SK-N-SH (cell line): ENCODE measurements at regions of chr7 and their contacts with region 1.

Region 1: GRCh38 chr7:39894904-39895303 is 55.2 kb upstream of the CDK13 start:
- DNase-seq: no peak
- H3K4me3 ChIP-seq: no peak overlapping the region
- H3K27ac ChIP-seq: no peak overlapping the region
- H3K4me1 ChIP-seq: no peaks in the 10 kb centered on the region; a peak in 1 of 4 replicates
- H3K27me3 ChIP-seq: peaks cover 18% of the 10 kb centered on the region; the same call in 1 of the 2 replicates
- CTCF ChIP-seq: no peak
- EP300 ChIP-seq: no peak
- RAD21 ChIP-seq: no peak

Region 2: DNA sequence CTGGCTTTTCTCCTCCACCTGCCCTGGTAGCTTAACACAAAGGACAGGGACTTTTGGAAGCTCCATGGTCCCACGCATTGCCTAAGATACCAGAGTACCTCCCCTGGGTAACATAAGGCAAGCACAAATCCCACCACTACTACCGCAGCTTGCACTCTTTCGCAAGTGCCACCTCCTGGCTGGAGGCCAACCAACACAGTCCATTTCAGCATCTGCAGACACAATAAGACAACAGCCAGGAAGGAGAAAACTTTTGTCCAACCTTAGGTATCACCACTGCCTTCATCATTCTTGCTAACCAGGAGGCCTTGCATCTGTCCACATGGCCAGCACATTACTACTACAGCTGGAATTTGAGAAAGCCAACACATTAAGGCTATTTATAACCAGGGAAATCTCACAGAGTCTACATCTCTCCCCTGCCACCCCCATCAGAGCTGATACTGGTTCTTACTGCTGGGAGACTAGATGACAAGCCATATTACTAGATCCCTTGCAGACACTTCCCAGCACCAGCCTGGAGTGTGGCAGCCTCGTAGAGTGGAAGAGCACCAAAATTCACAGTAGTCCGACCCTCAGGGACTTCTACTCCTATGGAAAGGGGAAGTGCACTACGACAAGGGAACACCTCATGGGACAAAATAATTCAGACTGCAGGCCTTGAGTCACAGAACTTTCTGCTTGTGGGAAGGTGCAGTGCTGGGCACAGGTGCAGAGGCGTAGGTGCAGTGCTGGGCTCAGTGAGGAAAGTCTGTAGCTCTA is 15.4 kb after region 1 on chr7:
- CTCF ChIA-PET with region 1: interaction called, 19 read pairs
- POLR2A ChIA-PET with region 1: no interaction called
- DNase-seq: no peak
- H3K4me3 ChIP-seq: no peak overlapping the region
- H3K27ac ChIP-seq: no peak overlapping the region
- H3K4me1 ChIP-seq: no peaks in the 10 kb centered on the region; a peak in 1 of 4 replicates
- H3K27me3 ChIP-seq: no peaks in the 10 kb centered on the region
- CTCF ChIP-seq: no peak
- EP300 ChIP-seq: no peak
- RAD21 ChIP-seq: no peak

Region 3: DNA sequence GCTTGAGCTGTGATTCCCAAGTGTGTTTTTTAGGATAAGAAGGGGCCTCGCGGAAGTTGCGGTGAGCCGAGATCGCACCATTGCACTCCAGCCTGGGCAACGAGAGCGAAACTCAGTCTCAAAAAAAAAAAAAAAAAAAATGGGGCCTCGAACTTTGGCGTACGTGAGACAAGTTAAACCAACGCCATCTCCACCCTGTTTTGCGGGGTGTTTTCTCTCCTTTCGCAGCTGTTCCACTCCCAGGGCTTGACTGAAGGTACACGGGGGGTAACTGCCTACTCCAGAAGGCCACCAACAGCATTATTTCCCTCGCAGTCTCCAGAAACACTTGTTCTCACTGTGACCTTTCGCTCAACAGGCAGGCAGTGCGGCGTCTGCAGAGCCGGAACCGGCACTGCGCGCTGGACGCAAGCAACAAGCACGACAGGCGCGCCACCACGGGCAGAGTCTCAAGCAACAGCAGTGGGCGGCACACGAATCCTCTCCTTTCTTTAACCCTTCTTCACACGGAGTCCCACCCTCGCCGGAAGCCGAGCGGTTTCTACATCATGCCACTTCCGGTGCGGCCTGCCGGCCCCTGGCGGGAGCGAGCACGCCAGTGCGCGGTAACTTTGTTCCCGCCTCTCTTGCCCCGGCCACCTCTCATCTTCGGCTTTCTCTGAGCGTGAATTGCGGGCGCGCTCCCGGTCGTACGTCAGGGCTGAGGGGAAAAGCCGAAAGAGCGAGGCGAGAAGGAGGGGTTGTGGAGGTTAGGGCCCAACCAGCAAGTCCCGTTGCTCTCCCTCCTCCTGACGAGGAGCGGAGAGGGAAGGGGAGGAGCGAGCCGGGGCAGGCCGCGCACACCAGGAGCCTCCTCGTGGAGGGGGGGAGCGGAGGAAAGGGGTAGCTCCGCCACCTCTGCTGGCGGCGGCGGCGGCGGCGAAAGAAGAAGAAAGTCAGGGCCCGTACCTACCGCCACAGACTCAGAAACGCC is 54.3 kb after region 1 on chr7:
- CTCF ChIA-PET with region 1: interaction called, 18 read pairs
- POLR2A ChIA-PET with region 1: no interaction called
- DNase-seq: peak; percentile 97
- H3K4me3 ChIP-seq: peak overlapping the region; percentile 96 to 97
- H3K27ac ChIP-seq: peak overlapping the region; percentile 97
- H3K4me1 ChIP-seq: peaks cover 0 to 20% of the 10 kb centered on the region in 2 experiments; a peak in 2 of 4 replicates
- H3K27me3 ChIP-seq: no peaks in the 10 kb centered on the region
- CTCF ChIP-seq: no peak
- EP300 ChIP-seq: no peak
- RAD21 ChIP-seq: peak; percentile 18; the same call in 1 of the 2 replicates

Region 4: DNA sequence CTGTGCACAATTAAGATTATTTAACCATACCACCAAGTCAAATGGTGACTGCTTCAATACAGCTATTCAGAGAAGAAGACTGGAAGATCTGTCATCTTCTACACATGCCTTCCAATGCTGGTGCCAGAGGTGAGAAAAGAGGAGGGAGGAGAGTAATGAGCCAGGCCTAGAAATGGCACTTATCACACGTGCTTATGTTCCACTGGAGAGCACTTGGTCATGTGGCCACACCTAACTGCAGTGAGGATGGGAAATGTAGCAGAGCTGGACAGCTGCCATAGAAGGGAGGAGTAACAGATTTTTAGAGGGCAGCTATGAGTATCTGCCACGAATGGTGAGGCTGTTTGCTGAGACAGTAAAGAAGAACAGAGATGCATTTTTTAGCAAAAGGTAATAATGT is 162.4 kb after region 1 on chr7:
- CTCF ChIA-PET with region 1: interaction called, 224 read pairs
- POLR2A ChIA-PET with region 1: no interaction called
- DNase-seq: no peak
- H3K4me3 ChIP-seq: no peak overlapping the region
- H3K27ac ChIP-seq: no peak overlapping the region
- H3K4me1 ChIP-seq: peaks cover 0 to 3% of the 10 kb centered on the region in 2 experiments; a peak in 1 of 4 replicates
- H3K27me3 ChIP-seq: no peaks in the 10 kb centered on the region
- CTCF ChIP-seq: no peak
- EP300 ChIP-seq: no peak
- RAD21 ChIP-seq: no peak

Region 5: GRCh38 chr7:40134428-40135316 is 239.8 kb after region 1 on chr7 and contains the starts of genes MPLKIP and SUGCT:
- CTCF ChIA-PET with region 1: interaction called, 21 read pairs
- POLR2A ChIA-PET with region 1: interaction called, 3 read pairs
- DNase-seq: peak; percentile 99
- H3K4me3 ChIP-seq: peak within 1 kb of the TSS; percentile 81 to 98
- H3K27ac ChIP-seq: peak within 1 kb of the TSS; percentile 91 to 95
- H3K4me1 ChIP-seq: peaks cover 8 to 9% of the 10 kb centered on the region in 2 experiments; a peak in 2 of 4 replicates
- H3K27me3 ChIP-seq: no peaks in the 10 kb centered on the region
- CTCF ChIP-seq: peak; percentile 99
- EP300 ChIP-seq: peak; percentile 20 to 21; a peak in 2 of 4 replicates
- RAD21 ChIP-seq: peak; percentile 49
- polyA plus RNA-seq, gene MPLKIP: 48.4 and 64.0 TPM in 2 replicates
- polyA plus RNA-seq, gene SUGCT: 41.4 and 53.7 TPM in 2 replicates

Region 6: GRCh38 chr7:40244226-40244625 is 349.3 kb after region 1 on chr7:
- CTCF ChIA-PET with region 1: no interaction called
- POLR2A ChIA-PET with region 1: no interaction called
- DNase-seq: no peak
- H3K4me3 ChIP-seq: no peak overlapping the region
- H3K27ac ChIP-seq: no peak overlapping the region
- H3K4me1 ChIP-seq: peaks cover 0 to 5% of the 10 kb centered on the region in 2 experiments; a peak in 1 of 4 replicates
- H3K27me3 ChIP-seq: no peaks in the 10 kb centered on the region
- CTCF ChIP-seq: no peak
- EP300 ChIP-seq: no peak
- RAD21 ChIP-seq: no peak